Naive thymus-derived CD4-positive, alpha-beta T cell (primary cell): ENCODE measurements at regions of chr20 and their contacts with region 1.

Region 1: GRCh38 chr20:36645998-36646397 is at the start of gene SLA2:
- DNase-seq: peak; percentile 36 to 75 (median 67)
- ATAC-seq: peak; percentile 92
- H3K4me3 ChIP-seq: peak within 1 kb of the TSS; percentile 82
- H3K4me3 Mint-ChIP-seq: peak within 1 kb of the TSS; percentile 93 to 100 (median 99)
- H3K27ac ChIP-seq: peak within 1 kb of the TSS; percentile 85
- H3K27ac Mint-ChIP-seq: peak within 1 kb of the TSS; percentile 94 to 99 (median 97)
- H3K4me1 ChIP-seq: peaks cover 30 to 35% of the 10 kb centered on the region in 2 donors
- H3K4me1 Mint-ChIP-seq: peaks cover 31 to 67% (median 58%) of the 10 kb centered on the region in 7 donors
- H3K27me3 ChIP-seq: no peaks in the 10 kb centered on the region
- H3K27me3 Mint-ChIP-seq: no peaks in the 10 kb centered on the region
- total RNA-seq, gene SLA2: 28.3 to 80.7 (median 29.7) TPM

Region 2: GRCh38 chr20:36550797-36551299 is 95.2 kb before region 1 on chr20:
- CTCF ChIA-PET with region 1: no interaction called
- POLR2A ChIA-PET with region 1: no interaction called
- intact Hi-C with region 1: loop called (anchors 1 to 2 kb)
- DNase-seq: no peak
- ATAC-seq: no peak
- H3K4me3 ChIP-seq: no peak overlapping the region
- H3K4me3 Mint-ChIP-seq: no peak overlapping the region
- H3K27ac ChIP-seq: no peak overlapping the region
- H3K27ac Mint-ChIP-seq: peak overlapping the region in 1 of 9 donors; percentile 60
- H3K4me1 ChIP-seq: no peaks in the 10 kb centered on the region
- H3K4me1 Mint-ChIP-seq: peaks cover 0 to 5% (median 2%) of the 10 kb centered on the region in 7 donors
- H3K27me3 ChIP-seq: no peaks in the 10 kb centered on the region
- H3K27me3 Mint-ChIP-seq: no peaks in the 10 kb centered on the region

Region 3: DNA sequence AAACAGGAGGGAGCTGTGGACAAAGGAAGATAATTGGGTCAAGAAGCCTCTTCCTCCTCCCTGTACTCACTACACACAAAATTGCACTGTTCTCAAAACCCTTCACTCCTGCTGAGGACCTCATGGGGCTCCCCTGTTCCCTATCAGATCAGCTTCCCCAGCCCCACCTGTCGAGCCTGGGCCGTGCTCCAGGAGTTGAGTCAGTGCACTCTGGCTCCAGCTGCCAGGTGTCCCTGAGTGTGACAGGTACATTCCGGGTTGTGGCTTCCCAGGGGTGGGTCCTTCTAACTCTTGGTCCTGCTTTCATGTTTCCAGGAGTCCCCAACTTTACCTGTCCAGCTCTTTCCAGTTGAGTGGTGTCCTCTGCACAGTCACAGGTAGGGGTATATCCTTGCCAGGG is 32.0 kb before region 1 on chr20:
- CTCF ChIA-PET with region 1: interaction called, 43 read pairs
- POLR2A ChIA-PET with region 1: interaction called, 15 read pairs
- intact Hi-C with region 1: loop called (anchors 1 to 2 kb)
- DNase-seq: no peak
- ATAC-seq: no peak
- H3K4me3 ChIP-seq: no peak overlapping the region
- H3K4me3 Mint-ChIP-seq: no peak overlapping the region
- H3K27ac ChIP-seq: peak overlapping the region; percentile 21
- H3K27ac Mint-ChIP-seq: peak overlapping the region in 5 of 9 donors; percentile 14 to 85 (median 33)
- H3K4me1 ChIP-seq: no peaks in the 10 kb centered on the region
- H3K4me1 Mint-ChIP-seq: peaks cover 5 to 28% (median 18%) of the 10 kb centered on the region in 7 donors
- H3K27me3 ChIP-seq: no peaks in the 10 kb centered on the region
- H3K27me3 Mint-ChIP-seq: no peaks in the 10 kb centered on the region

Region 4: DNA sequence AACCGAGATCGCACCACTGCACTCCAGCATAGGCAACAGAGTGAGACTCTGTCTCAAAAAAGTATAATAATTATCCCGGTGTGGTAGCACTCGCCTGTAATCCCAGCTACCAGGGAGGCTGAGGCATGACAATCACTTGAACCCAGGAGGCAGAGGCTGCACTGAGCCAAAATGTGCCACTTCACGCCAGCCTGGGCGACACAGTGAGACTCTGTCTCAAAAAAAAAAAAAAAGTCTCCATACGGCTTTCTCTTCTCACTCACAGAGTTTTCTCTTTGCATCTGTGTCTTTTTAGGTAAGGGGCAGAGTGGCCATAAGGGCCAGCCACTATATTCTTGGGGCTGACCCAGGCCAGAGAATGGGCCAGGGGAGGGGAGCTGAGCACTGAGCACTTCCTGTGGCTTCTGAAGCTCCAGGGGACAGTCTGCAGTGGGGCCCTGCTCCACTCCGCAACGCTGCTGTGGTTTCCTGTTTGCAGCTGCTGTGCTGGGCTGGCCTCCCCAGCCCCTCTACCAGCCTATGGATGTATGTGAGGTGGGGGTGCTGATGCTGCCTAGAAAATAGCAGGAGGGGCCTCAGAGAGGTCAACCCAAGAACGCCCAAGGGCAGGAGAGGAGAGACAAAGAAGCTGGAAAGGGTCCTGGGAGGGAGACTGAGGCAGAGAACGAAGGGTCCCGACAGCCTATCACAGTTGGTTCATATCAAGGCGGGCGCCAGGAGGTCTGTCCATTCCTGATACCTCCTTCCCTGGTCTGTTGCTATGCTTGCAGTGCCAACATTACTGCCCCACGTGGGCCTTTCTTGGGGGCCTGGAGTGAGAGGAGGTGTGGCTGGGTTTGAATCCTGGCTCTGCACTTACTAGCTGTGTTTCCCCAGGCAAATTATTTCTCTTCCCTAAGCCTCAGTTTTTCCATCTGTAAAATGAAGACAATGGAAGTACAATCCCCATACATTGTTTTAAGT is 16.0 kb before region 1 on chr20:
- CTCF ChIA-PET with region 1: interaction called, 15 read pairs
- POLR2A ChIA-PET with region 1: interaction called, 74 read pairs
- intact Hi-C with region 1: loop called (anchors 1 to 2 kb)
- DNase-seq: peak in 8 of 9 donors; percentile 28 to 48 (median 46)
- ATAC-seq: peak; percentile 88
- H3K4me3 ChIP-seq: peak overlapping the region; percentile 1
- H3K4me3 Mint-ChIP-seq: peak overlapping the region; percentile 79 to 89 (median 82)
- H3K27ac ChIP-seq: peak overlapping the region; percentile 64
- H3K27ac Mint-ChIP-seq: peak overlapping the region; percentile 91 to 98 (median 95)
- H3K4me1 ChIP-seq: peaks cover 23 to 33% of the 10 kb centered on the region in 2 donors
- H3K4me1 Mint-ChIP-seq: peaks cover 20 to 55% (median 47%) of the 10 kb centered on the region in 7 donors
- H3K27me3 ChIP-seq: no peaks in the 10 kb centered on the region
- H3K27me3 Mint-ChIP-seq: no peaks in the 10 kb centered on the region

Region 5: GRCh38 chr20:36745927-36746659 is 100.1 kb after region 1 on chr20 and contains the start of gene NDRG3:
- CTCF ChIA-PET with region 1: no interaction called
- POLR2A ChIA-PET with region 1: no interaction called
- intact Hi-C with region 1: loop called in 1 of 2 experiments (anchors 5 kb)
- DNase-seq: peak; percentile 81 to 93 (median 91)
- ATAC-seq: peak; percentile 100
- H3K4me3 ChIP-seq: peak within 1 kb of the TSS; percentile 93
- H3K4me3 Mint-ChIP-seq: peak within 1 kb of the TSS; percentile 85 to 94 (median 90)
- H3K27ac ChIP-seq: peak within 1 kb of the TSS; percentile 70
- H3K27ac Mint-ChIP-seq: peak within 1 kb of the TSS; percentile 83 to 97 (median 88)
- H3K4me1 ChIP-seq: peaks cover 5 to 7% of the 10 kb centered on the region in 2 donors
- H3K4me1 Mint-ChIP-seq: peaks cover 20 to 41% (median 29%) of the 10 kb centered on the region in 7 donors
- H3K27me3 ChIP-seq: no peaks in the 10 kb centered on the region
- H3K27me3 Mint-ChIP-seq: no peaks in the 10 kb centered on the region
- total RNA-seq, gene NDRG3: 20.8 to 30.6 (median 28.9) TPM